B cell (primary cell): ENCODE measurements at regions of chr20 and their contacts with region 1.

Region 1: GRCh38 chr20:49982346-49983122 is at the start of gene SNAI1:
- DNase-seq: peak; percentile 92
- ATAC-seq: peak; percentile 91
- H3K4me3 ChIP-seq: peak within 1 kb of the TSS in 4 of 5 experiments; percentile 27 to 67 (median 54)
- H3K4me3 Mint-ChIP-seq: peak within 1 kb of the TSS; percentile 81
- H3K27ac ChIP-seq: peak within 1 kb of the TSS; percentile 25 to 45
- H3K27ac Mint-ChIP-seq: peak within 1 kb of the TSS; percentile 80
- H3K4me1 ChIP-seq: peaks cover 18 to 26% of the 10 kb centered on the region in 2 donors
- H3K4me1 Mint-ChIP-seq: peaks cover 24% of the 10 kb centered on the region
- H3K27me3 ChIP-seq: peaks cover 0 to 2% (median 0%) of the 10 kb centered on the region in 4 experiments
- H3K27me3 Mint-ChIP-seq: no peaks in the 10 kb centered on the region
- CTCF ChIP-seq: peak; percentile 68
- total RNA-seq, gene SNAI1: 3.5 and 4.3 TPM in 2 replicates

Region 2: DNA sequence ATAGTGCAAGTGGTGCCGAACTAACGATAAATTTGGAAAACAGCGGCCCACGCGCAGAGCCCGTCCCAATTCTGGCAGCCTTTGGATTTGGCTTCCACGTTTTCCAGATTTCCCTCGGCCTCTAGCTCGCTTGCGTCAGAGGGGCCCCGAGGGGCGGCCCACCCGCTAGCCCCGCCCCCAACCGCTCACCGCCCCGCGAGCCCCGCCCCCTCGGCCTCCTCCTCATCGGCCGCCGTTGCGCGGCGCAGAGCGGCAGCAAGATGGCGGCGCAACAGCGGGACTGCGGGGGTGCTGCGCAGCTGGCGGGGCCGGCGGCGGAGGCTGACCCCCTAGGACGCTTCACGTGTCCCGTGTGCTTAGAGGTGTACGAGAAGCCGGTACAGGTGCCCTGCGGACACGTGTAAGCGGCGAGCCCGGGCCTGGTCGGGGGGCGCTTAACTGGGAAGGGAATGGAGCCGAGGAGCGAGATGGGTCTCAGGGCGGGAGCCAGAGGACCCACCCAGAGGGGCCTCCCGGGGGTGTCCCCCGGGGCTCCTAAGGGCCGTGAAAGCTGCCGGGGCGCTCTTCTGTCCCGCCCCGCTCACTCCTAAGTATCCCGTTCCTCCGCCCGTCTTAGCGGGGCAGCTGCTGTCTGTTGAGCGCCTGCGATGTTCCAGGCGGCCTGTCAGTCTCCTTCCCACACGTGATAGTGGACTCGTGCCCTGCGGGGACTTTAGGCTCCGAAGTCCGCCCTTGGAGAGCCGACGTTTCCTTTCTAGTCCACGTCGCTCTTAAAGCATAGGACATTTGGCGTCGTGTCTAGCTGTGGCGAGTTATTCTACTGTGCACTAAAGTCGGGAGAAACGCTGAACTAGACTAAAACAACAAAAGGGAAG is 46.1 kb before region 1 on chr20 and contains the start of gene RNF114:
- CTCF ChIA-PET with region 1: interaction called, 12 read pairs
- POLR2A ChIA-PET with region 1: no interaction called
- intact Hi-C with region 1: loop called (anchors 1 kb)
- DNase-seq: peak; percentile 93
- ATAC-seq: peak; percentile 93
- H3K4me3 ChIP-seq: peak within 1 kb of the TSS; percentile 78 to 99 (median 94)
- H3K4me3 Mint-ChIP-seq: peak within 1 kb of the TSS; percentile 99
- H3K27ac ChIP-seq: peak within 1 kb of the TSS; percentile 89 to 90
- H3K27ac Mint-ChIP-seq: peak within 1 kb of the TSS; percentile 93
- H3K4me1 ChIP-seq: peaks cover 33 to 42% of the 10 kb centered on the region in 2 donors
- H3K4me1 Mint-ChIP-seq: peaks cover 49% of the 10 kb centered on the region
- H3K27me3 ChIP-seq: no peaks in the 10 kb centered on the region
- H3K27me3 Mint-ChIP-seq: no peaks in the 10 kb centered on the region
- CTCF ChIP-seq: no peak
- total RNA-seq, gene RNF114: 81.7 and 86.0 TPM in 2 replicates

Region 3: GRCh38 chr20:49999329-49999728 is 16.8 kb after region 1 on chr20:
- CTCF ChIA-PET with region 1: interaction called, 15 read pairs
- POLR2A ChIA-PET with region 1: interaction called, 3 read pairs
- intact Hi-C with region 1: loop called (anchors 1 kb)
- DNase-seq: peak; percentile 82
- ATAC-seq: peak; percentile 98
- H3K4me3 ChIP-seq: no peak overlapping the region
- H3K4me3 Mint-ChIP-seq: peak overlapping the region; percentile 35
- H3K27ac ChIP-seq: no peak overlapping the region
- H3K27ac Mint-ChIP-seq: peak overlapping the region; percentile 5
- H3K4me1 ChIP-seq: peaks cover 8 to 12% of the 10 kb centered on the region in 2 donors
- H3K4me1 Mint-ChIP-seq: peaks cover 18% of the 10 kb centered on the region
- H3K27me3 ChIP-seq: no peaks in the 10 kb centered on the region
- H3K27me3 Mint-ChIP-seq: peaks cover 7% of the 10 kb centered on the region
- CTCF ChIP-seq: no peak

Region 4: DNA sequence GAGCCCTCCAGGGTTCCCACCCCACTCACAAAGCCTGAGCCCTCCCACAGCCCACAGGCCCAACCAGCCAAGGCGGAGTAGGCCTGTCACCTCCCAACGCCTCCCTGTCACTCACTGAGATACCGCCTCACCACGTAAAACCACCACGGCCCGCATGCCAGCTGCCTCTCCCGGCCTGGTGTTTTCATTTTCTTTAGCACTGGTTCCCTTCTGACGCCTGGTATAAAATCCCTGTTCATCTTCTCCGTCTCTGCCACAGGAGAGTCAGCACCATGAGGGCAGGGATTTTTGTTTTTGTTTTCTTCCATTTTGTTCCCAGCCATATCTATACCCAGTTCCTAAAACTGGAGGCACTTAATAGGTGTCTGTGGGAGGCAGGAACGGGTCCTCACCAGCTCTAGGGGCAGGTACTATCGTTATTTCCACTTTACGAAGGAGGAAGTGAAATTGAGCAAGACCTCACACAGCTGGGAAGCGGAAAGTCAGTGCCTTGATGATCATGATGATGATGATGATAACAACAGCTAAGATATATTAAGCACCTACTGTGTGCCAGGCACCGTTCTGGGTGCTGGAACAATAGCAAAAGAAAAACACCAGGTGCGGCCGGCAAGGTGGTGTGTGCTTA is 58.8 kb after region 1 on chr20:
- CTCF ChIA-PET with region 1: interaction called, 14 read pairs
- POLR2A ChIA-PET with region 1: no interaction called
- intact Hi-C with region 1: no loop called
- DNase-seq: peak; percentile 83
- ATAC-seq: peak; percentile 88
- H3K4me3 ChIP-seq: peak overlapping the region in 4 of 5 experiments; percentile 1 to 38 (median 34)
- H3K4me3 Mint-ChIP-seq: peak overlapping the region; percentile 83
- H3K27ac ChIP-seq: peak overlapping the region; percentile 80 to 86
- H3K27ac Mint-ChIP-seq: peak overlapping the region; percentile 93
- H3K4me1 ChIP-seq: peaks cover 12 to 22% of the 10 kb centered on the region in 2 donors
- H3K4me1 Mint-ChIP-seq: peaks cover 15% of the 10 kb centered on the region
- H3K27me3 ChIP-seq: no peaks in the 10 kb centered on the region
- H3K27me3 Mint-ChIP-seq: no peaks in the 10 kb centered on the region
- CTCF ChIP-seq: no peak

Region 5: DNA sequence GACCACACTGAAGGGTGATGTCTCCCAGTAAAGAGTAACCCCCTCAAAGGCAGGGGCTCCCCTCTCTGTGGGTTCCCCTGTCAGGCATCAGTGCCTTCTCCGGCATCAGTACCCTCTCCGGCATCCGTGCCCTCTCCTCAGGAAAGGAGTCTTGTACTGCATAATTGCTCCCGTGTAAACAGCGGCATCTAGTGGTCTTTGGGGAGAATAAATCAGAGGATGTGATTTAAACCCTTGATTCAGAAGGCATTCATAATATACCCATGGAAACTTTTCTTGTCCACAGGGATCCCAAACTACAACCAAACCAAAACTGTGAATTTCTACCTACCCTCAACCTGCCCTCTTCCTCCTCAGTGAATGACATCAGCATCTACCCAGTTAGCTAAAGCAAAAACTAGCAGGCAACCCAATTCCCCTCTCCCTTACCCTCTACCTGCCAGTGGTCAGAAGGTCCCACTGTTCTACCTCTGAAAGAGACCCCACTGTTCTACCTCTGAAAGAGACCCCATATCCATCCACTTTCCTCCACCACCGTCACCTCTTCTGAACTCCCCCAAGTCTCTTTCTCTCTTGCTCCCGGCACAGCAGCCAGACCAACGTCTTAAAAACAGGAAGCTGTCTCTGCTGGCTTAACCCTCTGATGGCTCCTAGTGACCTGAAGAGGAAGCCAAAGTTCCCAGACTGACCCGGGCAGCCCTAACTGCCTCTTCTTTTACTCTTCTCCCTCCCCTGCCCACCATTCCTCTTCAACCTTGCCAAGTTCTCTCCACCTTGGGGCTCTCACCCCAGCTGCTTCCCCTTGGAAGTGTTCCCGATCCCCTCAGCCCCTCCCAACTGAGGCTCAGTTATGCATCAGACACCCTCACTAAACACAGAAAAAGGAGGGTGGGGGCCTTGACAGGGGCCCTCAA is 103.2 kb after region 1 on chr20:
- CTCF ChIA-PET with region 1: interaction called, 116 read pairs
- POLR2A ChIA-PET with region 1: interaction called, 7 read pairs
- intact Hi-C with region 1: loop called (anchors 1 kb)
- DNase-seq: peak; percentile 71
- ATAC-seq: peak; percentile 86
- H3K4me3 ChIP-seq: peak overlapping the region; percentile 30 to 78 (median 61)
- H3K4me3 Mint-ChIP-seq: peak overlapping the region; percentile 88
- H3K27ac ChIP-seq: peak overlapping the region in 1 of 2 donors; percentile 65
- H3K27ac Mint-ChIP-seq: peak overlapping the region; percentile 64
- H3K4me1 ChIP-seq: peaks cover 12 to 13% of the 10 kb centered on the region in 2 donors
- H3K4me1 Mint-ChIP-seq: peaks cover 13% of the 10 kb centered on the region
- H3K27me3 ChIP-seq: no peaks in the 10 kb centered on the region
- H3K27me3 Mint-ChIP-seq: no peaks in the 10 kb centered on the region
- CTCF ChIP-seq: peak; percentile 87

Region 6: GRCh38 chr20:50153485-50154377 is 171.2 kb after region 1 on chr20 and contains the start of gene PEDS1:
- CTCF ChIA-PET with region 1: interaction called, 16 read pairs
- POLR2A ChIA-PET with region 1: no interaction called
- intact Hi-C with region 1: no loop called
- DNase-seq: peak; percentile 89
- ATAC-seq: peak; percentile 98
- H3K4me3 ChIP-seq: peak within 1 kb of the TSS; percentile 71 to 96 (median 87)
- H3K4me3 Mint-ChIP-seq: peak within 1 kb of the TSS; percentile 77
- H3K27ac ChIP-seq: peak within 1 kb of the TSS; percentile 63 to 85
- H3K27ac Mint-ChIP-seq: peak within 1 kb of the TSS; percentile 86
- H3K4me1 ChIP-seq: peaks cover 18 to 24% of the 10 kb centered on the region in 2 donors
- H3K4me1 Mint-ChIP-seq: peaks cover 38% of the 10 kb centered on the region
- H3K27me3 ChIP-seq: no peaks in the 10 kb centered on the region
- H3K27me3 Mint-ChIP-seq: no peaks in the 10 kb centered on the region
- CTCF ChIP-seq: no peak
- total RNA-seq, gene PEDS1: 11.2 and 13.9 TPM in 2 replicates

Region 7: DNA sequence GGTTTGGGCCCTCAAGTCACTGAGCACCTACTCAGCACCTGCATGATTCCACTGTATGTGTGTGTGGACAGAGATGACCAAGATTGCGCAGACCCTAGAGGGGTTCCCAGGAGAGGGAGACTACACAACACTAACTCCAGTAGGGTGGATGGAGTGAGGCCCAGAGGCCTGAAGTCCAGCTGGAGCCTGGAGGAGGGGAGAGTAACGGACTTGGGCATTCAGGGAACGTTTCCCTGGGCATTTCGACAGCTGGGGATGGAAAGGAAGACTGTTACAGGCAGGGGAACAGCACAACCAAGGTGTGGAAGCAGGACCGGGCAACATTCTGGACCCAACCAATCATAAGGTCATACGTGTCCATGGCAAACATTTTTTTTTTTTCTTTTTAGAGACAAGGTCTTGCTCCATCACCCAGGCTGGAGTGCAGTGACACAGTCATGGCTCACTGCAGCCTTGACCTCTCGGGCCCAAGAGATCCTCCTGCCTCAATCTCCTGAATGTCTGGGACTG is 197.0 kb after region 1 on chr20:
- CTCF ChIA-PET with region 1: interaction called, 23 read pairs
- POLR2A ChIA-PET with region 1: interaction called, 3 read pairs
- intact Hi-C with region 1: loop called (anchors 1 kb)
- DNase-seq: no peak
- ATAC-seq: peak; percentile 25
- H3K4me3 ChIP-seq: no peak overlapping the region
- H3K4me3 Mint-ChIP-seq: no peak overlapping the region
- H3K27ac ChIP-seq: no peak overlapping the region
- H3K27ac Mint-ChIP-seq: no peak overlapping the region
- H3K4me1 ChIP-seq: no peaks in the 10 kb centered on the region
- H3K4me1 Mint-ChIP-seq: no peaks in the 10 kb centered on the region
- H3K27me3 ChIP-seq: peaks cover 0 to under 1% (median 0%) of the 10 kb centered on the region in 4 experiments
- H3K27me3 Mint-ChIP-seq: peaks cover 9% of the 10 kb centered on the region
- CTCF ChIP-seq: peak; percentile 55

Region 8: DNA sequence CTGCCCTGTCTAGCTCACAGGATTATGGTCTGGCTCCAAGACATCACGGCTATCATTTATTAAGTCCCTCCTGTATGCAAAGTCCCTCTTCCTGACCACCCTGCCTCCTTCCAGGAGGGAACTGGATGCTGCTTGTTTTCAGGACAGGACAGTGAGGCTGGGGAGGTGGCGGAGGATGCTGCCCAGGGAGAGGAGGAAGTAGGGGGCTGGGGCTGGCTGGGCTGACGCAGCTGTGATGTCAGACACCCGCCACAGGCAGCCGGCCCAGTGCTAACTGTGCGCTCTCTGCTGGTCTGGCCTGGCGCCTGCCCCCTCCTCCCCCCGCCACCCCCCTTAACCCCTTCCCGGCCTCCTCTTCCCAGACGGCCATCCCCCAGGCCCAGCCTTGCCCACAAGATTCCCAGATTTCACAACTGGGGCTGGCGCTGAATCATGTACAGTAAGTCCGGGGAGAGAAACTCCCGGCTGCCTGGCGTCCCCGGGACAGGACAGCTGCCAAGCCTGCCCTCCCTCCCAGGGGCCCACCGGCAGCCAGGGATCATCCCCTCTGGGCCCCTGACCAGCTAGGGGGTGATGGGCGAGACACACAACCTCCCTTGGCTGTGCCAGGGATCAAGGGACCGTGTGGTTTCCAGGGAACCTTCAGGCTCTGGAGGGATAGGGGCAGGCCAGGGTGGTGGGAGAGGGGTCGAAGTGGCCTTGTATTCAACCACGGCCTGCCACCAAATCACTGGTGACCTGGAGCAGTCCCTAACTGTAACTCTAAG is 326.2 kb after region 1 on chr20:
- CTCF ChIA-PET with region 1: no interaction called
- POLR2A ChIA-PET with region 1: no interaction called
- intact Hi-C with region 1: no loop called
- DNase-seq: no peak
- ATAC-seq: no peak
- H3K4me3 ChIP-seq: no peak overlapping the region
- H3K4me3 Mint-ChIP-seq: no peak overlapping the region
- H3K27ac ChIP-seq: no peak overlapping the region
- H3K27ac Mint-ChIP-seq: no peak overlapping the region
- H3K4me1 ChIP-seq: no peaks in the 10 kb centered on the region
- H3K4me1 Mint-ChIP-seq: no peaks in the 10 kb centered on the region
- H3K27me3 ChIP-seq: peaks cover 0 to 2% (median 0%) of the 10 kb centered on the region in 4 experiments
- H3K27me3 Mint-ChIP-seq: peaks cover 19% of the 10 kb centered on the region
- CTCF ChIP-seq: no peak